Mammary epithelial cell (primary cell): ENCODE measurements at regions of chr16 and their contacts with region 1.

Region 1: GRCh38 chr16:30395155-30395991 is at the start of gene ZNF48:
- DNase-seq: peak; percentile 56
- H3K4me3 ChIP-seq: peak within 1 kb of the TSS; percentile 73 to 85 (median 78)
- H3K27ac ChIP-seq: no peak within 1 kb of the TSS
- H3K4me1 ChIP-seq: peaks cover 12% of the 10 kb centered on the region
- H3K27me3 ChIP-seq: no peaks in the 10 kb centered on the region
- CTCF ChIP-seq: peak in 1 of 2 donors; percentile 38
- total RNA-seq, gene ZNF48: 8.8 to 17.7 TPM

Region 2: GRCh38 chr16:30115238-30115637 is 280.1 kb before region 1 on chr16:
- CTCF ChIA-PET with region 1: no interaction called
- dilution Hi-C with region 1: loop called (anchors 5 kb)
- in situ Hi-C with region 1: no loop called
- intact Hi-C with region 1: no loop called
- DNase-seq: no peak
- H3K4me3 ChIP-seq: no peak overlapping the region
- H3K27ac ChIP-seq: no peak overlapping the region
- H3K4me1 ChIP-seq: peaks cover 20% of the 10 kb centered on the region
- H3K27me3 ChIP-seq: no peaks in the 10 kb centered on the region
- CTCF ChIP-seq: no peak

Region 3: GRCh38 chr16:30378236-30379204 is 16.9 kb before region 1 on chr16:
- CTCF ChIA-PET with region 1: no interaction called
- dilution Hi-C with region 1: no loop called
- in situ Hi-C with region 1: no loop called
- intact Hi-C with region 1: loop called (anchors 1 kb)
- DNase-seq: peak; percentile 97
- H3K4me3 ChIP-seq: peak overlapping the region; percentile 67 to 78 (median 73)
- H3K27ac ChIP-seq: peak overlapping the region; percentile 58
- H3K4me1 ChIP-seq: peaks cover 16% of the 10 kb centered on the region
- H3K27me3 ChIP-seq: no peaks in the 10 kb centered on the region
- CTCF ChIP-seq: peak; percentile 1 to 35